ENCODE measurements at regions of chr2 and their contacts with region 1.

Region 1: DNA sequence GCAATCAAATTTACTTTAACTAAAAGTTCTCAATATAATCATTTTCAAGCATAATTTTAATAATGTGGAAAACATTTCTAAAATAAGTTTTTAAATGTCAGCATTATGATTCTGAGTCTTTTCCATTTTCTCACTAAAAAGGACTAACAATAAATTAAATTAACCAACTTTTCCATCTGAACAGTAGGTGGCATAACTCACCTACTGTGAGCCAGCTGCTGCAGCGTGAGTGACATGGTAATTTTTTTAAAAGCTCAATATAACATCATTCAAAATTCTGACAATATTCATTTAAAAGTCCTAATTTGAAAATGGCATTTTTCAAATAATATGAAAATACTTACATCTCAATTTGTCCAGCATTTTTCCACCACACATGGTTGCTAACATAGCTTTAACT is 66.5 kb downstream of the DTNB start:
- DNase-seq: peak; percentile 57
- H3K4me3 Mint-ChIP-seq: no peak overlapping the region
- H3K27ac Mint-ChIP-seq: no peak overlapping the region
- H3K4me1 Mint-ChIP-seq: no peaks in the 10 kb centered on the region
- H3K27me3 Mint-ChIP-seq: no peaks in the 10 kb centered on the region
- CTCF ChIP-seq: peak; percentile 71

Region 2: GRCh38 chr2:25514043-25514637 is 92.8 kb before region 1 on chr2:
- CTCF ChIA-PET with region 1: no interaction called
- POLR2A ChIA-PET with region 1: no interaction called
- intact Hi-C with region 1: no loop called
- DNase-seq: no peak
- H3K4me3 Mint-ChIP-seq: no peak overlapping the region
- H3K27ac Mint-ChIP-seq: no peak overlapping the region
- H3K4me1 Mint-ChIP-seq: peaks cover 29% of the 10 kb centered on the region
- H3K27me3 Mint-ChIP-seq: no peaks in the 10 kb centered on the region
- CTCF ChIP-seq: no peak

Region 3: GRCh38 chr2:25590921-25591505 is 15.9 kb before region 1 on chr2:
- CTCF ChIA-PET with region 1: interaction called, 19 read pairs
- POLR2A ChIA-PET with region 1: interaction called, 4 read pairs
- intact Hi-C with region 1: no loop called
- DNase-seq: no peak
- H3K4me3 Mint-ChIP-seq: no peak overlapping the region
- H3K27ac Mint-ChIP-seq: no peak overlapping the region
- H3K4me1 Mint-ChIP-seq: peaks cover 15% of the 10 kb centered on the region
- H3K27me3 Mint-ChIP-seq: no peaks in the 10 kb centered on the region
- CTCF ChIP-seq: no peak

Region 4: GRCh38 chr2:25664183-25664964 is 57.5 kb after region 1 on chr2:
- CTCF ChIA-PET with region 1: interaction called, 150 read pairs
- POLR2A ChIA-PET with region 1: interaction called, 26 read pairs
- intact Hi-C with region 1: loop called (anchors 1 kb)
- DNase-seq: peak; percentile 88
- H3K4me3 Mint-ChIP-seq: peak overlapping the region; percentile 15
- H3K27ac Mint-ChIP-seq: peak overlapping the region; percentile 50
- H3K4me1 Mint-ChIP-seq: peaks cover 31% of the 10 kb centered on the region
- H3K27me3 Mint-ChIP-seq: no peaks in the 10 kb centered on the region
- CTCF ChIP-seq: peak; percentile 43

Region 5: DNA sequence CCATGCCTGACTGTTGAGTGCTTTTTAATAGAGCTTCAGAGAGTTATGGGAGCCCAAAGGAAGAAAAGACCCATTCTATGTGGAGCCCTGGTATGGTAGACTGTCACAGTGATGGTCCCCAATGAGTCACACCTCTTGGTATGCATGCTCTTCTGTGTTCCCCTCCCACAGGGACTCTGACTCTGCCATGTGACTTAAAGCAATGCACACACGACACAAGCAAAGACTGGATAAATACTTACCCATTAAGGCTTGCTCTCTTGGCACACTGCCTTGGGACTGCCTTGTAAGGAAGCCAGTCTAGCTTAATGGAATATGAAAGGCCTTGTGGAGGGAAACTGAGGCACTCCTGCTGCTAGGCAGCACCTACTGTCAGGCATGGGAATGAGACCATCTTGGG is 83.2 kb after region 1 on chr2:
- CTCF ChIA-PET with region 1: interaction called, 204 read pairs
- POLR2A ChIA-PET with region 1: interaction called, 3 read pairs
- intact Hi-C with region 1: no loop called
- DNase-seq: no peak
- H3K4me3 Mint-ChIP-seq: no peak overlapping the region
- H3K27ac Mint-ChIP-seq: no peak overlapping the region
- H3K4me1 Mint-ChIP-seq: peaks cover 5% of the 10 kb centered on the region
- H3K27me3 Mint-ChIP-seq: no peaks in the 10 kb centered on the region
- CTCF ChIP-seq: no peak

Region 6: DNA sequence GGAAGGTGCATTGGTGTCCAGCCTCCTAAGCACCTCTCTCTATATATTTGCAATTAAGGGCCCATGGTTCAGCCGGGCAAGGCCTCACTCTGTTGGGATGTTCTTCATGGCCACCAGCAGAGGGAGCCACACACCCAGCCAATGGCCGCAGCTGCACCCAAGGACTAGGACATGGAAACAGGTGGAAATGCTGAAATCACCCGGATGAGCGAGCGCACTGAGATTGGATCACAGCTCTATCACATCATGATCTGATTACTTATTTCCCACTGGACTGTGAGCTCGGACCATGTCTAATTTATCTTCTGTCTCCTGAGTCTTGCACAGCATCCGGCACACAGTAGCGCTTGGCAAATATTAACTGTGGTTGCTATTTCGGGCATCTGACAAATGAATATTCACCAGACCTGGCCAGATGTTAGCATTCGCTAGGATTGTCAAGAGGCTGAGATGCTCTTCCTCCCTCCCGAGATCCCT is 344.2 kb after region 1 on chr2:
- CTCF ChIA-PET with region 1: interaction called, 6 read pairs
- POLR2A ChIA-PET with region 1: no interaction called
- intact Hi-C with region 1: loop called (anchors 2 kb)
- DNase-seq: peak; percentile 85
- H3K4me3 Mint-ChIP-seq: no peak overlapping the region
- H3K27ac Mint-ChIP-seq: no peak overlapping the region
- H3K4me1 Mint-ChIP-seq: no peaks in the 10 kb centered on the region
- H3K27me3 Mint-ChIP-seq: no peaks in the 10 kb centered on the region
- CTCF ChIP-seq: peak; percentile 91

Region 7: GRCh38 chr2:26196683-26197418 is 590.0 kb after region 1 on chr2:
- CTCF ChIA-PET with region 1: no interaction called
- POLR2A ChIA-PET with region 1: no interaction called
- intact Hi-C with region 1: no loop called
- DNase-seq: no peak
- H3K4me3 Mint-ChIP-seq: no peak overlapping the region
- H3K27ac Mint-ChIP-seq: no peak overlapping the region
- H3K4me1 Mint-ChIP-seq: no peaks in the 10 kb centered on the region
- H3K27me3 Mint-ChIP-seq: no peaks in the 10 kb centered on the region
- CTCF ChIP-seq: no peak

Region 8: DNA sequence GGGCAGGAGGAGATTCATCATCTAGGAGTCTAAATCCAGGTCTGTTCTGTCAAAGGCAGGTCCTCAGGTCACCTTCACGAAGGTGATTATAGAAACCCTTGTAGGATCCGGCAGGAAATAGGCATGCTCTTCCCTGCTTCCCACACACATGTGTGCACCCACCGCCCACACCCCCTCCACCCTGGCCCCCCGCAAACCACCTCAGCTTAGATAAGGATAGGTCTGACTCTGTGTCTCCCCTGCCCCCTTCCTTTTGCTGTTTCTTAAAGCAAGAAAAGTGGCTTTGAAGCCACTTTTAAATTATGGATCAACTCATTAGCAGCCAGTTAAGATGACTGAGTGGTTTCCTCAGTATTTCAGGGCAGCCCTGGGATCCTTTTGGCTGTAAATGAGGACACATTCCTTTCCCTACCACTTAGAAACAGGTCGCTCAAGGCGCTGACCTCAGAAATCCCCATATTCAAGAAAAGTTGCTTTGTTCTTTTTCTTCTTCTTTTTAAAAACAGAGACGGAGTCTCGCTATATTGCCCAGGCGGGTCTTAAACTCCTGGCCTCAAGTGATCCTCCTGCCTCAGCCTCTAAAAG is 1048.8 kb after region 1 on chr2:
- CTCF ChIA-PET with region 1: no interaction called
- POLR2A ChIA-PET with region 1: no interaction called
- intact Hi-C with region 1: no loop called
- DNase-seq: no peak
- H3K4me3 Mint-ChIP-seq: no peak overlapping the region
- H3K27ac Mint-ChIP-seq: no peak overlapping the region
- H3K4me1 Mint-ChIP-seq: no peaks in the 10 kb centered on the region
- H3K27me3 Mint-ChIP-seq: peaks cover 84% of the 10 kb centered on the region
- CTCF ChIP-seq: no peak

Measured in MCF 10A (cell line).